SK-N-SH (cell line): ENCODE measurements at regions of chr20 and their contacts with region 1.

Region 1: DNA sequence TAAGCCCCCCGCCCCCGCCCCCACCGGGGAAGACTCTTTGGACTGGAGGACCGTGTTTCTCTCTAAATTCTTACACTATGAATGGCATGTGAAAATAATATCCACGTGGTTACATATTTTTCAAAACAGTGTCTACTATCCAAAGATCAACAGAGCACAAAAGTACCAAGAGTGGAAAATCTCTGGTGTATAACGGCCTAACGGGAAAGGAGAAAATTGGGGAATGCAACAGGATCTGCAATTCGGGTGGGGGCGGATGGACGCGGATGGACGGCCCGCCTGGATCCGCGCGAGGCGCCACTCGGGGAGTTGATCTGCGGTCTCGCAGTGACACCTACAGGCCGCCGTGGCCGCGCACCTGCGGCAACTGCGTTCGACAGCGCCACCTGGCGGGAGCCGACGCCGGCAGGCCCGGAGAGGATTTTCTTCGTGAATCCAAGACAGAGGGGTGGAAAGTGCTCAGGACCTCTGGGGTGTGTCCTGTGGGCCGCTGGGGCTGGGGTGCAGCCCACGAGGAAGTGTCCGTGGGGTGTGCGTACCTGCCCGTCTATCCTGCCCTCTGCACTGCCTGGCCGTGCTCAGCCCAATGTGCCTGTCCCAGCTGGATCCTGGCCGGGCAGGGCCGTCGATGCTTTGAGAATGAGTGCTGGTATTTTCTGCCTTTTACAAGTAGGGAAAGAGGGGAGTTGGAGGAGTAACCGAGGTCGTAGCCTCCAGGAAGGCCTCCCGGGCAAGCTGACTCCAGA is 18.6 kb downstream of the ANKRD60 start:
- DNase-seq: peak; percentile 94
- H3K4me3 ChIP-seq: peak overlapping the region in 1 of 2 experiments; percentile 56; a peak in 1 of 4 replicates
- H3K27ac ChIP-seq: no peak overlapping the region
- H3K4me1 ChIP-seq: peaks cover 0 to 11% of the 10 kb centered on the region in 2 experiments; a peak in 1 of 4 replicates
- H3K27me3 ChIP-seq: no peaks in the 10 kb centered on the region; the same call in 1 of the 2 replicates
- CTCF ChIP-seq: peak; percentile 100
- EP300 ChIP-seq: no peak
- RAD21 ChIP-seq: peak; percentile 99

Region 2: DNA sequence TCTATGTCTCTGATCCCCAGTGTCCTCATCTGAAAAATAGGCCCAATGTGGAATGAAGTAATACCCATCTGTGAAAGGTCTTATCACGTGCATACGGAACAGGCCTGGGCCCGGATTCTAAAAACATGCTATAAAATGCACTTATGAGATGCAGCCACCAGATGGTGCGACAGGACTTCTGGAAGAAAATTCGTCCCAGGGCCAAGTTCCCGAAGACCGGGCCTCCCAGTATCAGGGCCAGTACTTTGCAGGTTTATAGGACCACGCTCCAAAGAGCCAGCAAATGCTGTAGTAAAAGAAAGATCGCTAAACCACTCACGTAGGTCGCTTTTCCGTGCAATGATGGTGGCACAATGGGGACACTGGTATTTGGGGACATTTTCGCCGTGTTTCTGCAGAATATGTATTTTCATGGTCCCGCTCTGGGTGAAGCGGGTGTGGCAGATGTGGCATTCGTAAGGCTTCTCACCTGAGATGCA is 695.5 kb before region 1 on chr20:
- CTCF ChIA-PET with region 1: interaction called, 29 read pairs
- POLR2A ChIA-PET with region 1: no interaction called
- DNase-seq: peak; percentile 77
- H3K4me3 ChIP-seq: no peak overlapping the region; a peak in 1 of 4 replicates
- H3K27ac ChIP-seq: no peak overlapping the region
- H3K4me1 ChIP-seq: peaks cover 0 to 2% of the 10 kb centered on the region in 2 experiments; a peak in 1 of 4 replicates
- H3K27me3 ChIP-seq: no peaks in the 10 kb centered on the region; the same call in 1 of the 2 replicates
- CTCF ChIP-seq: peak; percentile 72
- EP300 ChIP-seq: no peak
- RAD21 ChIP-seq: peak; percentile 94

Region 3: DNA sequence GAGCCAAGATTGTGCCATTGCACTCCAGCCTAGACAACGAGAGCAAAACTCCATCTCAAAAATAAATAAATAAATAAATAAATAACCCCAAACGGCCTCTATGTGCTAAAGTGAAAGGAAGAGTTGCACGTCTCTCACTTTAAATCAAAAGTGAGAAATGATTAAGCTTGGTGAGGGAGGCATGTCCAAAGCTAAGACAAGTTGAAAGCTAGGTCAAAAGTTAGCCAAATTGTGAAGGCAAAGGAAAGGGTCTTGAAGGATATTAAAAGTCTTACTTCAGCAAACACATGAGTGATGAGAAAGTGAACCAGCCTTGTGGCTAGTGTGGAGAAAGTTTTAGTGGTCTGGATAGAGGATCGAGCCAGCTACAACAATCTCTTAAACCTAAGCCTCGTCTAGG is 603.9 kb before region 1 on chr20:
- CTCF ChIA-PET with region 1: interaction called, 356 read pairs
- POLR2A ChIA-PET with region 1: no interaction called
- DNase-seq: no peak
- H3K4me3 ChIP-seq: no peak overlapping the region
- H3K27ac ChIP-seq: no peak overlapping the region
- H3K4me1 ChIP-seq: no peaks in the 10 kb centered on the region
- H3K27me3 ChIP-seq: no peaks in the 10 kb centered on the region; the same call in 1 of the 2 replicates
- CTCF ChIP-seq: no peak
- EP300 ChIP-seq: no peak
- RAD21 ChIP-seq: no peak

Region 4: DNA sequence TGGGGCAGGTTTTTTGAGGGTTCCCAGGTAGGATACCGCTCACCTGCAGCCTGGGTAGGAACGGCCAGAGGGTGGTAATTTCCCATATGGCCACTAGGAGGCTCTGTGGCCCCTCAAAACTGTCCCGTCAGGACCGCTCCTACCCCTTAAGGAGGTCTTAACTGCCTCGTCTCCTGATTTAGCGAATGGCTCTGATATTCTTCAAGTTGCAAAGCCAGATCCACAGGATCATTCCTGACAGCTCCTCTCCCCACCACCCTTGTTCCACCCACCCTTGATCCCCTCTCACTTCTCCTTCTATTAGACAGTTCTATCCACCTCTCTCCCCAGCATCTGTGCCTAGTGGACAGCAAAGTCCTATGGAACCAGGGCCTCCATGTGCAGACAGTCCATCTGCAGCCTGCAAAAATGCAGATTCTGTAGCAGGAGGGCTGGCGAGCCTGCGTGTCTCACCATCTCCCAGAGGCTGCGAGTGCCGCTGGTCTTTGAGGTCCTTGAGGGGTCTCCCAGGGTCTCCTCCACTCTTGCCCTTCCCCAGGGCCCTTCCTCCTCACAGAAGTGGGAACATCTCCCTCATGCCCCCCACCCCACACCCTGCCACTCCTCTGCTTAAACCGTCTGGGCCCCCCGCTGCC is 555.3 kb before region 1 on chr20:
- CTCF ChIA-PET with region 1: interaction called, 11 read pairs
- POLR2A ChIA-PET with region 1: no interaction called
- DNase-seq: peak; percentile 93
- H3K4me3 ChIP-seq: no peak overlapping the region; a peak in 1 of 4 replicates
- H3K27ac ChIP-seq: peak overlapping the region in 1 of 2 experiments; percentile 17; a peak in 2 of 4 replicates
- H3K4me1 ChIP-seq: peaks cover 0 to 16% of the 10 kb centered on the region in 2 experiments; a peak in 1 of 4 replicates
- H3K27me3 ChIP-seq: no peaks in the 10 kb centered on the region
- CTCF ChIP-seq: peak; percentile 93
- EP300 ChIP-seq: no peak
- RAD21 ChIP-seq: peak; percentile 92

Region 5: GRCh38 chr20:58198337-58198736 is 11.5 kb before region 1 on chr20:
- CTCF ChIA-PET with region 1: interaction called, 20 read pairs
- POLR2A ChIA-PET with region 1: no interaction called
- DNase-seq: no peak
- H3K4me3 ChIP-seq: no peak overlapping the region
- H3K27ac ChIP-seq: no peak overlapping the region
- H3K4me1 ChIP-seq: no peaks in the 10 kb centered on the region; a peak in 1 of 4 replicates
- H3K27me3 ChIP-seq: no peaks in the 10 kb centered on the region
- CTCF ChIP-seq: no peak
- EP300 ChIP-seq: no peak
- RAD21 ChIP-seq: no peak

Region 6: DNA sequence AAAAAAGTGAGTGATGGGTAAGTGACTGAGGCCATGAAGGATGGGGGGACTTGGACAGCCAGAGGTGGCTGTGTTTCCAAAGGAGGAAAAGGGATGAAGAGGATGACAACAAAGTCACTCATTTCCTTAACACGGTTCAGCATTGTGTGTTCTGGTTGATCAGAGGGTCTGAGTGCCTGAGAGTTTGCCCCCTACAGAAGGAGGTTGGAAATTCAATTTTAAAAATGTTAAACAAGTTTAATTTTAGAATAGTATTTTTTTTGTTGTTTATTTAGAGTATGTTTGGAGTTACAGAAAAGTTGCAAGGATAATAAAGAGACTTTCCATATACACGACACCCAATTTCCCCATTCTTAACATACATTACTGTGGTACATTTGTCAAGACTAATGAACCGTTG is 168.9 kb after region 1 on chr20:
- CTCF ChIA-PET with region 1: no interaction called
- POLR2A ChIA-PET with region 1: no interaction called
- DNase-seq: no peak
- H3K4me3 ChIP-seq: no peak overlapping the region
- H3K27ac ChIP-seq: no peak overlapping the region
- H3K4me1 ChIP-seq: peaks cover 0 to 3% of the 10 kb centered on the region in 2 experiments; a peak in 1 of 4 replicates
- H3K27me3 ChIP-seq: no peaks in the 10 kb centered on the region
- CTCF ChIP-seq: peak; percentile 20; the same call in 1 of the 2 replicates
- EP300 ChIP-seq: no peak
- RAD21 ChIP-seq: 0 out of 2 replicates have a peak, but pooled peaks have one; percentile 2